ENCODE measurements at regions of chr1 and their contacts with region 1.

Region 1: GRCh38 chr1:241022366-241022765 is 334.6 kb downstream of the RGS7 start:
- DNase-seq: no peak
- H3K4me3 ChIP-seq: no peak overlapping the region
- H3K27ac ChIP-seq: no peak overlapping the region
- H3K4me1 ChIP-seq: no peaks in the 10 kb centered on the region
- H3K27me3 ChIP-seq: peaks cover 18% of the 10 kb centered on the region; the same call in 1 of the 2 replicates
- CTCF ChIP-seq: no peak

Region 2: DNA sequence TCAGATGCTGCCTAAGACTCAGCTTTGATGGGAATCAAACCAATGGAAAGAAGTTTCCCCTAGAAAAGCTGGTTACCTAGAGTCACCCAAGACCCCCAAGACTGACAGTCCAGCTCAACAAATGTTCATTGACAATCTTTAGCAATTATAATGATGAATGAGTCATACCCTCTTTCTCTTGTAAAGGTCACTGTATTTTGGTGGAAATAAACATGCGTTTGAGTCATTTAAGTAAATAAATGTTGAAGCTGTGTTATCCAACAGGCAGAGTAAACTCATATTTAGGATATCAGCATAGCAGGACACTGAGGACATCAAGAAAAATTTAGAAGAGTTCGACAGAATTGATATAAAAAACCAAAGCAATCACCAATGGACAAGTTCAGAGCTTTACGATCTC is 38.7 kb after region 1 on chr1:
- CTCF ChIA-PET with region 1: no interaction called
- POLR2A ChIA-PET with region 1: interaction called, 10 read pairs
- intact Hi-C with region 1: no loop called
- DNase-seq: no peak
- H3K4me3 ChIP-seq: no peak overlapping the region
- H3K27ac ChIP-seq: no peak overlapping the region
- H3K4me1 ChIP-seq: no peaks in the 10 kb centered on the region
- H3K27me3 ChIP-seq: no peaks in the 10 kb centered on the region; the same call in 1 of the 2 replicates
- CTCF ChIP-seq: no peak